Psoas muscle (tissue), 8 donors: ENCODE measurements at regions of chr1 and their contacts with region 1.

Region 1: GRCh38 chr1:159132271-159132881 is 39.0 kb upstream of the CADM3 start:
- DNase-seq: peak; percentile 44 to 64
- ATAC-seq: peak in 2 of 4 donors; percentile 52 to 58
- H3K4me3 ChIP-seq: no peak overlapping the region
- H3K27ac ChIP-seq: no peak overlapping the region
- H3K4me1 ChIP-seq: no peaks in the 10 kb centered on the region
- H3K27me3 ChIP-seq: peaks cover 0 to 7% (median 2%) of the 10 kb centered on the region in 3 donors
- CTCF ChIP-seq: peak; percentile 80

Region 2: GRCh38 chr1:159214149-159214760 is 81.9 kb after region 1 on chr1:
- intact Hi-C with region 1: loop called in 1 of 2 experiments (anchors 2 kb)
- DNase-seq: no peak
- ATAC-seq: peak in 3 of 4 donors; percentile 67 to 74 (median 73)
- H3K4me3 ChIP-seq: no peak overlapping the region
- H3K27ac ChIP-seq: no peak overlapping the region
- H3K4me1 ChIP-seq: no peaks in the 10 kb centered on the region
- H3K27me3 ChIP-seq: peaks cover 0 to 18% (median 3%) of the 10 kb centered on the region in 3 donors
- CTCF ChIP-seq: peak; percentile 80

Region 3: GRCh38 chr1:159891275-159892157 is 759.1 kb after region 1 on chr1:
- intact Hi-C with region 1: loop called in 1 of 2 experiments (anchors 10 kb)
- DNase-seq: peak; percentile 79 to 88
- ATAC-seq: peak; percentile 97 to 99 (median 98)
- H3K4me3 ChIP-seq: no peak overlapping the region
- H3K27ac ChIP-seq: no peak overlapping the region
- H3K4me1 ChIP-seq: peaks cover 5% of the 10 kb centered on the region
- H3K27me3 ChIP-seq: no peaks in the 10 kb centered on the region
- CTCF ChIP-seq: peak; percentile 97

Region 4: GRCh38 chr1:160006312-160006940 is 874.0 kb after region 1 on chr1:
- intact Hi-C with region 1: loop called in 1 of 2 experiments (anchors 5 kb)
- DNase-seq: peak; percentile 58 to 67
- ATAC-seq: peak in 2 of 4 donors; percentile 59 to 60
- H3K4me3 ChIP-seq: no peak overlapping the region
- H3K27ac ChIP-seq: no peak overlapping the region
- H3K4me1 ChIP-seq: no peaks in the 10 kb centered on the region
- H3K27me3 ChIP-seq: no peaks in the 10 kb centered on the region
- CTCF ChIP-seq: peak; percentile 62